Left cardiac atrium (tissue), 4 donors: ENCODE measurements at regions of chr21 and their contacts with region 1.

Region 1: DNA sequence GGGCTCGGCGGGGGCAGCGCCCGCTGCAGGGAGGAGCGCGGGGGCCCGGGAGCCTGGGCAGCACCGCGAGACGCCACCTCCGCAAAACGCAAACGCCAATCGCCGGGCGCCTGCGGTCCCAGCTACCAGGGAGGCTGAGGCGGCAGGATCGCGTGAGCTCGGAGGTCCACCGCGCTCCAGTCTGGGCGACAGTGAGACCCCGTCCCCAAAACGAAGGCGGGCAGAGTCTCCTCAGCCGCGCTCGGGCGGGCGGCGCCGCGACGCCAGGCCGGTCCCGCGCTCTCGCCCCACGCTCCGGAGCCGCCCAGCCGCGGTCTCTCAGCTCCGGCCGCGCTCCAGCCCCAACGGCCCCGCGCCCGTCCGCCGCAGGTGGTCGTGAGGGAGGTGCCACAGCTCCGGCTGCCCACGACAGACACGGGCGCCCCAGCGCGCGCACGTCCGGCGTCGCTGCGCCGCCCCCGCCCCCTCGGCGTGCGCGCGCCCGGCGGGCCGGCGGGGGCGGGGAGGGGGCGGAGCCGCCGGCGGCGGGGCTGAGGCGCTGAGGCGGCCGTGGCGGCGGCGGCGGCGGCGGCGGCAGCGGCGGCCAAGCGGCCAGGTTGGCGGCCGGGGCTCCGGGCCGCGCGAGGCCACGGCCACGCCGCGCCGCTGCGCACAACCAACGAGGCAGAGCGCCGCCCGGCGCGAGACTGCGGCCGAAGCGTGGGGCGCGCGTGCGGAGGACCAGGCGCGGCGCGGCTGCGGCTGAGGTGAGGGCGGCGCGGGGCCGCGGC is at the start of gene ADARB1:
- DNase-seq: peak; percentile 73
- ATAC-seq: peak; percentile 72 to 90
- total RNA-seq, gene ADARB1: 20.6 to 21.7 TPM

Region 2: DNA sequence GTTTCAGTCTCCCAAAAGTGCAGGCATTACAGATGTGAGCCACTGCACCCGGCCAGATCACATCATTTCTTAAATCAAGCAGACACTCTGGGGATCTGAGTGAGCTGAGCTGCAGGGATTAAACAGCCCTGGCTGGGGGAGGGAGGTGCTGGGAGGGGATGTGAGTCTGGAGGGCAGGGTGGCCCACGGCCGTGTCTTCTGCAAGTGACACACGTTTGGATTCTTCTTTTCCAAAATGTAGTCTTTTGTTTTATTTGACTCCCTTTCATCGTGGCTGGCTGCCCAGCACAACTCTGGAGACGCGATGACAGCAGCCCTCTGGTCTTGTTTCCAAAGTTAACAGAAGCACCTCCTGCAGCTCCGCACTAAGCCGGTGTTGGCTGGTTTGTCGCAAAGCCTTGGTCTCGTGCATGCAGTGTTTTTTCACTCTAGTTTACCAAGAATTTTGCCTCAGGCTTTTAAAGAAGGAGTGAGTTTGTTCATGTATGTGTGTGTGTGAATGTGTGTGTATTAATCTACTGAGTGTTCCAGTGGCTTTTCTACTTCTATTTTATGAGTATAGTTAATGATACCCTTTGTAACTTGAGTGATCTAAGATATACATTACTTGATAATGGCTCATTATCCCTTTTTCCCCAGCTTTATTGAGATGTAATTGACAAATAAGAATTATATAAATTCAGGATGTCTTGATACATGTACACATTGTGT is 491.0 kb before region 1 on chr21:
- intact Hi-C with region 1: no loop called
- DNase-seq: no peak
- ATAC-seq: peak in 1 of 2 donors; percentile 77

Region 3: GRCh38 chr21:44958471-44959191 is 115.6 kb before region 1 on chr21:
- intact Hi-C with region 1: loop called in 1 of 2 experiments (anchors 5 kb)
- DNase-seq: peak; percentile 87
- ATAC-seq: peak; percentile 76 to 82